HEK293 (cell line): ENCODE measurements at regions of chr4 and their contacts with region 1.

Region 1: DNA sequence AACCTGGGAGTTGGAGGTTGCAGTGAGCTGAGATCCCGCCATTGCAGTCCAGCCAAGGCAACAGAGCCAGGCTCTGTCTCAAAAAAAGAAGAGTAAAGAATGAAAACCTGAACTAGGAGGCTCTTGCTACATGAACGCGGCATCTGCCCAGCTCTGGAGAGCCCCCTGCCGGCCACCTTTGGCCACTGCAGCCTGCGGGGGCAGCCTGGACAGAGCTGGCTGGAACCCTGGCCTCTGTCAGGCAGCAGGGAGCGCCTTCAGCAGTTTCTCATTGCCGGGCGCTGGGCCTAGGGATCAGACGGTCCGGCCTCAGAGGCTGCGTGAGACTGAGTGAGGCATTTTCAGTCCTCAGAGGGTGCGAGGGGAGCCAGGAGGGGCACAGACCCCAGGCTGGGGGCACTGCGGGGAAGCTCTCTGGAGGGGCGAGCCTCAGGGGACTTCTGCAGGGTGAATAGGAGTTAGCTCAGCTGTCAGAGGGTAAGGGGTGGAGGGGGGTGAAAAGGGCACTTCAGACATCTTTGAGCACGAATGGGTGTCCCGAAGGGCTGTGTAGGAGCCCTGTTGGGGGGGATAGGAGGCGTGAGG is 17.5 kb downstream of the DOK7 start:
- H3K4me3 ChIP-seq: no peak overlapping the region
- H3K27ac ChIP-seq: no peak overlapping the region
- H3K4me1 ChIP-seq: no peaks in the 10 kb centered on the region; the same call in 1 of the 2 replicates
- CTCF ChIP-seq: peak; percentile 85

Region 2: GRCh38 chr4:3384785-3385732 is 95.6 kb before region 1 on chr4:
- CTCF ChIA-PET with region 1: no interaction called
- POLR2A ChIA-PET with region 1: no interaction called
- H3K4me3 ChIP-seq: no peak overlapping the region
- H3K27ac ChIP-seq: no peak overlapping the region
- H3K4me1 ChIP-seq: peaks cover 9% of the 10 kb centered on the region; the same call in 1 of the 2 replicates
- CTCF ChIP-seq: no peak

Region 3: GRCh38 chr4:3470244-3471097 is 10.1 kb before region 1 on chr4:
- CTCF ChIA-PET with region 1: interaction called, 16 read pairs
- POLR2A ChIA-PET with region 1: no interaction called
- H3K4me3 ChIP-seq: no peak overlapping the region
- H3K27ac ChIP-seq: no peak overlapping the region
- H3K4me1 ChIP-seq: no peaks in the 10 kb centered on the region
- CTCF ChIP-seq: no peak